Activated CD4-positive, alpha-beta T cell treated with anti-CD3 and anti-CD28 coated beads for 36 hours (primary cell): ENCODE measurements at regions of chr2 and their contacts with region 1.

Region 1: DNA sequence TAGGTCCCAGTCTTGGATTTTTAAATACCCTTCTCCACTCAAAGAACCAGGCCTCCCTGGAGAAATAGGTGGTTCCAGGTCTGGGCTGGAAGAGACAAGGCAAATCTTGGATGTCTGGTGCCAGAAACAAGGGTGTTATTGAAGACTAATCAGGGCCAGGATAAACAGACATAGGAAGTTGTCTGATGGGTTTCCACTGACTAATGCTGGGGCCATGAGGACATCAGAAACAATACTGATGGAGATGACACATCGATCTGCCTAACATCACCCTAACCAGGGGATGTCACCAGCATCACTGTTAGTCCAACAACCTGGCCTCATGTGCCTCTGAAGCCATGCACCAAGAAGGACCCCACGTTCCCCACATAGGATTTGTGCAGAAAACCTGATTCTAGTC is 42.5 kb upstream of the GLI2 start:
- DNase-seq: no peak
- ATAC-seq: no peak
- H3K4me3 Mint-ChIP-seq: no peak overlapping the region
- H3K27ac Mint-ChIP-seq: no peak overlapping the region
- H3K4me1 Mint-ChIP-seq: peaks cover 5% of the 10 kb centered on the region
- H3K27me3 Mint-ChIP-seq: peaks cover 35% of the 10 kb centered on the region

Region 2: GRCh38 chr2:120436885-120437603 is 256.1 kb before region 1 on chr2:
- CTCF ChIA-PET with region 1: no interaction called
- POLR2A ChIA-PET with region 1: no interaction called
- intact Hi-C with region 1: no loop called
- DNase-seq: peak; percentile 58
- ATAC-seq: peak; percentile 33
- H3K4me3 Mint-ChIP-seq: no peak overlapping the region
- H3K27ac Mint-ChIP-seq: no peak overlapping the region
- H3K4me1 Mint-ChIP-seq: peaks cover 2% of the 10 kb centered on the region
- H3K27me3 Mint-ChIP-seq: peaks cover 20% of the 10 kb centered on the region

Region 3: GRCh38 chr2:120958623-120959366 is 265.7 kb after region 1 on chr2:
- CTCF ChIA-PET with region 1: no interaction called
- POLR2A ChIA-PET with region 1: no interaction called
- intact Hi-C with region 1: loop called in 1 of 2 experiments (anchors 10 kb)
- DNase-seq: peak; percentile 41
- ATAC-seq: no peak
- H3K4me3 Mint-ChIP-seq: no peak overlapping the region
- H3K27ac Mint-ChIP-seq: no peak overlapping the region
- H3K4me1 Mint-ChIP-seq: no peaks in the 10 kb centered on the region
- H3K27me3 Mint-ChIP-seq: no peaks in the 10 kb centered on the region

Region 4: GRCh38 chr2:121071034-121071504 is 377.9 kb after region 1 on chr2:
- CTCF ChIA-PET with region 1: interaction called, 5 read pairs
- POLR2A ChIA-PET with region 1: interaction called, 4 read pairs
- intact Hi-C with region 1: loop called in 1 of 2 experiments (anchors 1 kb)
- DNase-seq: peak; percentile 78
- ATAC-seq: no peak
- H3K4me3 Mint-ChIP-seq: no peak overlapping the region
- H3K27ac Mint-ChIP-seq: no peak overlapping the region
- H3K4me1 Mint-ChIP-seq: no peaks in the 10 kb centered on the region
- H3K27me3 Mint-ChIP-seq: peaks cover 17% of the 10 kb centered on the region

Region 5: DNA sequence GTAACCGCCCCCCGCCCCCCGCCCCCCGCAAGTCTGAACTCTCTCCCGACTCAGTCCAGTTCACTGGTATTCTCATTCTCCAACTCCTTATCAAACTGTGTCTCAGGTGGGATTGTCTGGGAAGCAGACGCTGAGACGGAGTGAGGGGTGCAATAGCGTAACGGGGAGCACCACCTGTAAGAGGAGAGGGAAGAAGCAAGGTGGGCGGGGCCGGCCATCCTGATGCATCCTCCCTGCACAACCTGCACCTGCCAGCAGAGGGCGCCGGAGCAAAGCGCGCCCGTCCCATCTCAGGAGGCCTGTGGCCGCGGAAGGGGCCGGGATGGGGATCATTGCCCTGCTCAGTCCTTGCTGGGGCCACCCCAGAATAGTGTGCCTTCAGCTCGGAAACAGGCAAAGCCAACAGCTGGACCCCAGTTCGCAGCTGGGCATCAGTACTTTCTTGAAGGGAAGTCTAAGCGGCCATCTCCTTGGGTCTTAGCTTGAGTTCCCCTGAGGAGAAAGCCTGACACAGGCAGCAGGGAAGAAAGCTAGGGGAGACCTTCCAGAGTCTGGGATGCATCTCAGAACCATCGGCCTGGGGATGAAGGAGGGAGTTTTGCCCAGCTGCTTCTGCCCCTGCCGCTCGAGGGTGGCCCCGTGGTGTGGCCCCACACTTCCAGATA is 383.9 kb after region 1 on chr2:
- CTCF ChIA-PET with region 1: interaction called, 7 read pairs
- POLR2A ChIA-PET with region 1: interaction called, 4 read pairs
- intact Hi-C with region 1: loop called (anchors 1 kb)
- DNase-seq: peak; percentile 87
- ATAC-seq: peak; percentile 60
- H3K4me3 Mint-ChIP-seq: no peak overlapping the region
- H3K27ac Mint-ChIP-seq: no peak overlapping the region
- H3K4me1 Mint-ChIP-seq: peaks cover 2% of the 10 kb centered on the region
- H3K27me3 Mint-ChIP-seq: peaks cover 23% of the 10 kb centered on the region